Ovary (tissue), 10 donors: ENCODE measurements at regions of chr11 and their contacts with region 1.

Region 1: DNA sequence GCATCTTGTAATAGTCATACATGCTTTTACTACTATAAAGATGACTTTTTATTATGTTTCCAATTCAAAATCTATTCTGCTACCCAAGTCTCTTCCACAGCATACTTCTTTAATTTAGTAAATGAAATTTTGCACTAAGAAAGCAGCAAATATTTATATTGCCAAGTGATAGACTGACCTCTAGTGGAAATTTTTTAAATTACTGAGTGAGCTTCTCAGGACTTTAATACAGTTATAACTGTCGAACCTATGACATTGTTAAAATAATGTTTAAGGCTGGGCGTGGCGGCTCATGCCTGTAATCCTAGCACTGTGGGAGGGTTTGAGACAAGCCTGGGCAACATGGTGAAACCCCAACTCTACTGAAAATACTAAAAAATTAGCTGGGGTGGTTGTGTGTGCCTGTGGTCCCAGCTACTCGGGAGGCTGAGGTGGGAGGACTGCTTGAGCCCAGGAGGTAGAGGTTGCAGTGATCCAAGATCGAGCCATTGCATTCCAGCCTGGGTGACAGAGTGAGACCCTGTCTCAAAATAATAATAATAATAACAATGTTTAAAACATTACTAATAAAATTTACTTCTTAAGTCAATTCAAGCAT is 27.3 kb downstream of the STK33 start:
- DNase-seq: no peak
- H3K4me3 ChIP-seq: no peak overlapping the region
- H3K27ac ChIP-seq: no peak overlapping the region
- H3K4me1 ChIP-seq: no peaks in the 10 kb centered on the region
- H3K27me3 ChIP-seq: no peaks in the 10 kb centered on the region
- CTCF ChIP-seq: peak; percentile 28 to 59 (median 40)
- EP300 ChIP-seq: no peak
- POLR2A ChIP-seq: no peak

Region 2: DNA sequence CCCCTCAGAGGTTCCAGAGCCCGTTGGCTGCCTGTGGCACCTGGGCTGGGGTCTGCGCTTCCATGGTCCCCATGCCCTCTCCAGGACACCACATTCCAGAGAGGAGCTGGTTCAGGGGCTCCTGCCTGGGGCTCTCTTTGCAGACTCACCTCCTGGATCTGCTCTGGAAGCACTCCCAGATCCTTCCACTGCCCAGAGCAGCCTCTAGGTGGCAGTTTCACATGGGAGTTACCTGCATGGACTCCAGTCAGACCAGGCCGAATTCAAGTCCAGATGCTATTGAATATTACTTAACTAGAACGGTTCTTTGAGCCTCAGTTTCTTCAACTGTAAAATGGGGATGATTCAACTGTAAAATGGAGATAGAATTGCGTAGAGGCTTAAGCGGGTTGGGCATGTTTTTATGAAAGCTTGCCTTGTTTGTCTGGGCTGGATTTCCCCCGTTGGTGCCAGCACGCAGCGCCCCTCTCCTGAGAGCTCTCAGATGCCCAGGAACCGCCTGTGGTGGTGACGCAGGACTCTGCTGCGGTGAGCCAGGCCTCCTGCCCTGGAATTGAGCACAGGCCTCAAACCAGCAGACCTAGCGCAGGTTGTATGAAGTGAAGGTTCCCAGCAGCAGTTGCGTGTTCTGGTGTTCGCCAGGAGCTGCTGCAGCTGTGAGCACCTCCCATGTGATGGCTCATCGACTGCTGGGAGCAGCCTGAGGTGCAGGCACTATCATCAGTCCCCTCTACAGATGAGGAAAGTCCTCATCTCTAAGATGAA is 347.3 kb before region 1 on chr11:
- intact Hi-C with region 1: loop called in 1 of 4 experiments (anchors 5 kb)
- DNase-seq: peak in 2 of 5 donors; percentile 42 to 51
- H3K4me3 ChIP-seq: no peak overlapping the region
- H3K27ac ChIP-seq: no peak overlapping the region
- H3K4me1 ChIP-seq: no peaks in the 10 kb centered on the region
- H3K27me3 ChIP-seq: no peaks in the 10 kb centered on the region
- CTCF ChIP-seq: no peak
- EP300 ChIP-seq: no peak
- POLR2A ChIP-seq: no peak

Region 3: DNA sequence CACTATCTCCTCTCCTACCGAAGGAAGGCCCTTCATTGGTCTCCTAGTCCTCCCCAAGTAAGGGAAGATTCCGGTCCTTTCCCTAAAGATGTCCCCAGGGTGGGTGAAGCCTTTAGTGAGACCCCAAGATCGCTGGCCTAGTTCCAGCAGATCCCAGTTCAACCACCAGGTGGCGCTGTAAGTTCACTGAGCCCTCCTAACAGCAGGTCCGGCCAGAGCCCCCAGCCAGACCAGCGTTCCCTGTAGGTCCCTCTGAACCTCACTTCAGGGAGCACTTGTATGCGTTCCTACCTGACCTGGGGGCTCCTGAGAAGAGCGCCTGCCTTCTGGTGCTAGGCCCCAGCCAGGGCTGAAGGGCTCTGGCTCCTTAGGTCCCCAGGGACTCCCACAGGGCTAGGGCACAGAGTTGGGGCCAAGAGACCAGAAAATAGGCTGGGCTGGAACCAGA is 341.1 kb before region 1 on chr11:
- intact Hi-C with region 1: loop called (anchors 2 to 5 kb)
- DNase-seq: peak; percentile 67 to 88 (median 80)
- H3K4me3 ChIP-seq: no peak overlapping the region
- H3K27ac ChIP-seq: no peak overlapping the region
- H3K4me1 ChIP-seq: no peaks in the 10 kb centered on the region
- H3K27me3 ChIP-seq: no peaks in the 10 kb centered on the region
- CTCF ChIP-seq: peak; percentile 91 to 93 (median 91)
- EP300 ChIP-seq: no peak
- POLR2A ChIP-seq: no peak

Region 4: DNA sequence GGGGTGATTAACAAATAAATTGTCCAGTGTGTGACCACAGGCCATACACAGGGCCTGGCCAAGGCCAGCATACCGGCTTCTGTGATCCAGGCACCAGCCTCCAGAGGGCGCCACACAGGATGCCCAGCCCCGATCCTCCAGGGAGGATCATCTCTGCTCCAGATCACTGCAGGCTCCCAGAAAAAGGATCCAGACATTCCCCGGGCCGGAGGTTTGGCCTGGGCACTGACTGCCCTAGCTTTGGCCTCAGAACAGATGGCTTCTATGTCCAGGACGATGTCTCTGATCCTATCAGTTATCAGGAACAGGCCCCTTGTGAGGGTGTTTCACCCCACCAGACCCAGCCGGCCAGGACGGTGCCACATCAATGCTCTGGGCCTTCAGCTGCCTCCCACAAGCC is 228.6 kb before region 1 on chr11:
- intact Hi-C with region 1: loop called in 1 of 4 experiments (anchors 10 kb)
- DNase-seq: peak in 3 of 5 donors; percentile 30 to 68 (median 50)
- H3K4me3 ChIP-seq: no peak overlapping the region
- H3K27ac ChIP-seq: no peak overlapping the region
- H3K4me1 ChIP-seq: no peaks in the 10 kb centered on the region
- H3K27me3 ChIP-seq: no peaks in the 10 kb centered on the region
- CTCF ChIP-seq: peak in 1 of 3 donors; percentile 13
- EP300 ChIP-seq: no peak
- POLR2A ChIP-seq: no peak

Region 5: DNA sequence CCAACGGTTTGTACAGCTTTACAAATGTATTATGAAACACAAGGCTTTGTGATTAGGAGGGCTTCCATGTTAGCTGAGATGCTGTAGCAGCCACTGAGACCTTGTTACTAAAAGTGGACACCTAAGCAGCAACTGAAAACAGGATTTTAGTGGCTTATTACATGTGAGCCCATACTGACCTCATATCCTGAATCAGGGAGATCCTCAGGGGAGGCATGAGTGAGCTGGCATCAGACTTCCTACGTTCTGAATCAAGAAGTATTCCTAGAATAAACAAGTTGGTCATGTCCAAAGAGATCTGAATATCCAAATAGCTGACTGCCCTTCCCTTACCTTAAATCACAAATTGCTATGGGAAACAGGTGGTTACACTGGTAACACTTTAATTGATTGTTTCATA is 583.8 kb after region 1 on chr11:
- intact Hi-C with region 1: no loop called
- DNase-seq: no peak
- H3K4me3 ChIP-seq: no peak overlapping the region
- H3K27ac ChIP-seq: no peak overlapping the region
- H3K4me1 ChIP-seq: no peaks in the 10 kb centered on the region
- H3K27me3 ChIP-seq: no peaks in the 10 kb centered on the region
- CTCF ChIP-seq: no peak
- EP300 ChIP-seq: no peak
- POLR2A ChIP-seq: no peak

Region 6: GRCh38 chr11:10247011-10247410 is 1680.3 kb after region 1 on chr11:
- intact Hi-C with region 1: no loop called
- DNase-seq: no peak
- H3K4me3 ChIP-seq: no peak overlapping the region
- H3K27ac ChIP-seq: no peak overlapping the region
- H3K4me1 ChIP-seq: no peaks in the 10 kb centered on the region
- H3K27me3 ChIP-seq: no peaks in the 10 kb centered on the region
- CTCF ChIP-seq: no peak
- EP300 ChIP-seq: no peak
- POLR2A ChIP-seq: no peak